MCF 10A (cell line): ENCODE measurements at regions of chr2 and their contacts with region 1.

Region 1: GRCh38 chr2:207529330-207530159 is at the start of gene CREB1:
- DNase-seq: peak; percentile 98
- H3K4me3 Mint-ChIP-seq: peak within 1 kb of the TSS; percentile 94
- H3K27ac Mint-ChIP-seq: peak within 1 kb of the TSS; percentile 100
- H3K4me1 Mint-ChIP-seq: peaks cover 18% of the 10 kb centered on the region
- H3K27me3 Mint-ChIP-seq: no peaks in the 10 kb centered on the region
- CTCF ChIP-seq: no peak
- total RNA-seq, gene CREB1: 54.6 and 71.3 TPM in 2 replicates

Region 2: DNA sequence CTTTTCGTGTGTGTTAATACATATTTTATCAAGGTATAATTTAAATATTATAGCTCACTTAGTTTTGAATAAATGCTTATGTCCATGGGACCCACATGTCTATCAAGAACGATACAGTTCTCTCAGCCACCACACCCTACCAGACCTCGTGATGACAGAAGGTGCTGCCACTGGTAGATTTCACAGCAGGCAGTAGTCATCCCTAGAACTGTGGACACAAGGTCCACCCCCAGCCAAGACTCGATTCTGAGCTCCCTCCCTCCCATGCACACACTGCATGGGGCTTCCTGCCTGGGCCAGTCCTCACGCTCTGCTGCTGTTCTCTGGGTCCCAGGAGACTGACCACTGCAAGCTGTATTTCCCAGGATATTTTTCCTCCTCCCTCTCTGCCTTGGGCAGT is 26.3 kb before region 1 on chr2:
- CTCF ChIA-PET with region 1: interaction called, 5 read pairs
- POLR2A ChIA-PET with region 1: interaction called, 44 read pairs
- intact Hi-C with region 1: loop called (anchors 2 kb)
- DNase-seq: no peak
- H3K4me3 Mint-ChIP-seq: no peak overlapping the region
- H3K27ac Mint-ChIP-seq: peak overlapping the region; percentile 95
- H3K4me1 Mint-ChIP-seq: peaks cover 34% of the 10 kb centered on the region
- H3K27me3 Mint-ChIP-seq: no peaks in the 10 kb centered on the region
- CTCF ChIP-seq: no peak

Region 3: GRCh38 chr2:207540431-207540830 is 10.9 kb after region 1 on chr2:
- CTCF ChIA-PET with region 1: interaction called, 7 read pairs
- POLR2A ChIA-PET with region 1: interaction called, 17 read pairs
- intact Hi-C with region 1: no loop called
- DNase-seq: no peak
- H3K4me3 Mint-ChIP-seq: no peak overlapping the region
- H3K27ac Mint-ChIP-seq: no peak overlapping the region
- H3K4me1 Mint-ChIP-seq: peaks cover 6% of the 10 kb centered on the region
- H3K27me3 Mint-ChIP-seq: no peaks in the 10 kb centered on the region
- CTCF ChIP-seq: no peak

Region 4: GRCh38 chr2:207558106-207558505 is 28.6 kb after region 1 on chr2:
- CTCF ChIA-PET with region 1: interaction called, 3 read pairs
- POLR2A ChIA-PET with region 1: interaction called, 33 read pairs
- intact Hi-C with region 1: loop called (anchors 2 kb)
- DNase-seq: peak; percentile 68
- H3K4me3 Mint-ChIP-seq: no peak overlapping the region
- H3K27ac Mint-ChIP-seq: peak overlapping the region; percentile 52
- H3K4me1 Mint-ChIP-seq: peaks cover 29% of the 10 kb centered on the region
- H3K27me3 Mint-ChIP-seq: no peaks in the 10 kb centered on the region
- CTCF ChIP-seq: no peak

Region 5: DNA sequence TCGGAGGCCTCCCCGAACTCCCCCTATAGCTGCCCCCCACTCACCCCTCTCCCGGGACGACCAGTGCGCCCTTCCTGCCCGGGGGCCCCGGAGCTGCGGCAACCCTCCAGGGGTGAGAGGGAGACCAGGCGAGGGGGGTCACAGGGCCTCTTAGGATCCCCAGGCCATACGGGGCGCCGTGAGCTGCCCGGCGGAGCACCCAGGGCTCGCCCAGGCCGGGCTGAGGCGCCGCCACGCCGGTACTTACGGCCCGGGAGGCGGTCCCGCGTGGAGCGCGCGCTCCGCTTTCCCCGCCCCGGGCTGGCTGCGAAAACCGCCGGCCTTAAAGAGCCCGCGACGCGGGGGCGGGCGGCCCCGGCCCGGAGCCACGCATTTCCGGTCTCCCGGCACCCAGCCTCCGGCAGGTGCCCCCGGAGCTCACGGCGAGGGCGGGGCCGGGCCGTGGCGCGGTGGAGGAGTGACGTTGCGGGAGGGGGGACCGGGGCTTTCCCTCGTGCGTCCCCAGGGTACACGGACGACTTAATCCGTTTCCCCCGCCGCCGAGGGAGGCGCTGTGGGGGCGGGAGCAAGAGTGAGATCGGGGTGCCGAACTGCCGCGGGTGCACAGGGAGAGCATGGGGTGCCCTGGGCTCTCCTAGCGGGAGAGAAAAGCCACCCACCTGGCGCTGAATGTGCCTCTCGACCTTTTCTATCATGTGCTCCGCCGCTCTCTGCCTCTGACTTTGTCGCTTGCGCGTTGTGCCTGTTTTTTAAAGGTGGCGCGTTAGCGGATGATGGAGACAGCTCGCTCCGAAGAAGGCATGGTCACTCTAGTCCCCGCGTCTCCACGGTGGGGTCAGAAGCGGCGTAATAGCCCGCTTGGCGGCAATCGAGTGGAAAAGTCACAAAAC is 95.7 kb after region 1 on chr2 and contains the start of gene METTL21A:
- CTCF ChIA-PET with region 1: no interaction called
- POLR2A ChIA-PET with region 1: interaction called, 44 read pairs
- intact Hi-C with region 1: loop called (anchors 2 kb)
- DNase-seq: peak; percentile 85
- H3K4me3 Mint-ChIP-seq: peak within 1 kb of the TSS; percentile 86
- H3K27ac Mint-ChIP-seq: peak within 1 kb of the TSS; percentile 74
- H3K4me1 Mint-ChIP-seq: peaks cover 25% of the 10 kb centered on the region
- H3K27me3 Mint-ChIP-seq: no peaks in the 10 kb centered on the region
- CTCF ChIP-seq: peak; percentile 25
- total RNA-seq, gene METTL21A: 8.4 and 13.5 TPM in 2 replicates

Region 6: DNA sequence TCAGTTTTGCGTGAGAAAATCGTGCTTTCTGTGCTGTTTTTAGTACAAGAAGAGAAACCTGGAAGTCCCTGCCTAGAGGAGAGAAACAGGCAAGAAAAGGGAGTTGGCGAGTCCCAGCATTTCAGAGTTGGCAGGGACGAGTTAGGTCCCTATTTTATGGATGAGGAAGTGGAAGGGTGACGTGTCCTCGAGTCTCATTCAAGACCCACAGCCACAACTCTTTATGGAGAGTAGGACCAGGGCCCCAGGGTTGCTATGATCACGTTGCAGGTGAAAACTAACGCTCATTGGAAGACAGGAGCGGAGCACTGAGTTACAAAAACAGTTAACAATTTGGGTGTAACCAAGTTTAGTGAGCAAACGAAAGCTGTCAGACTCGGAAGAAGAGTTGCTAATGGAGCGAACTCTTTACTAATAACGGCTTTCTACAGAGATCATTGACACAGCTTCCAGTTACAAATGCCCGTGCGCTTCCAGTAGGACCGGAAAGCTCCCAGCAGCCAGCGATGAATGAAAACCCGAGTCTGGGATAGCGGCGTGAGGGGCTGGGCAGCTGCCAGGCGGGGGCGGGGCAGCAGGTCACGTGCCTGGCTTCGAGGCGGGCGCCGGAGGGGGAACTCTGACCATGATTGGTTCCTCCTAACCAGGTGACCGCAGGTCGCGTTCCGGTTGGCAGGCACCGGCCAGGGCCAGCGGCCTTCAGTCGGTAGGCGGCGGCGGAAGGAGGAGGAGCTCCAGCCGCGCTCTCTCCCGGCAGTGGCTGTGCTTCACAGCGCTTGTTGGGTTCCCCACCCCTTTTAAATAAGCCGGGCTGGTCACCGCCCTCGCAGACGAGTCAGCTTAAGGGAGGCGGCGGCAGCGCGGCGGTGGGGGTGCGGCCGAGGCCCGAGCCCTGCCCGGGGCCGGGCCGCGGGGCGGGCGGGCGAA is 181.5 kb after region 1 on chr2 and contains the start of gene CCNYL1:
- CTCF ChIA-PET with region 1: interaction called, 4 read pairs
- POLR2A ChIA-PET with region 1: interaction called, 28 read pairs
- intact Hi-C with region 1: loop called (anchors 10 kb)
- DNase-seq: peak; percentile 98
- H3K4me3 Mint-ChIP-seq: peak within 1 kb of the TSS; percentile 99
- H3K27ac Mint-ChIP-seq: peak within 1 kb of the TSS; percentile 96
- H3K4me1 Mint-ChIP-seq: peaks cover 17% of the 10 kb centered on the region
- H3K27me3 Mint-ChIP-seq: no peaks in the 10 kb centered on the region
- CTCF ChIP-seq: no peak
- total RNA-seq, gene CCNYL1: 19.7 and 23.3 TPM in 2 replicates

Region 7: DNA sequence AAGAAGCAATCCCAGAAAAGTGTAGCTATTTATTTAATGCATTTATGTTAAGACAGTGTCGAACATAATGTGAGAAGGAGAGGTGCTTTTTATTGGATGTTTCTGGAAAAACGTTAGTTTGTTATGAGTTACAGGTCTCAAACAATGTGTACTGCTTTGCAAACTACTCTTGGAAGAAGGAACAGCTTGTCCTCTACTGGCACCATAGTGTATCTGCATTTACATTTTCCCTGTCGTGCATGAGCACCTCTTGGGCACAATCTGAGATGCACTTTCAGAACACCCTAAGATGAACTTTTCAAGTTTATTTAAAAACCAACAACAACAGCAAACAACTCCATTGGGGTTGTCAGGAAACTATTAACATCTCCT is 204.7 kb after region 1 on chr2:
- CTCF ChIA-PET with region 1: interaction called, 12 read pairs
- POLR2A ChIA-PET with region 1: interaction called, 5 read pairs
- intact Hi-C with region 1: no loop called
- DNase-seq: peak; percentile 43
- H3K4me3 Mint-ChIP-seq: no peak overlapping the region
- H3K27ac Mint-ChIP-seq: no peak overlapping the region
- H3K4me1 Mint-ChIP-seq: peaks cover 5% of the 10 kb centered on the region
- H3K27me3 Mint-ChIP-seq: no peaks in the 10 kb centered on the region
- CTCF ChIP-seq: peak; percentile 26